Cardiac septum (tissue), 1 donor: ENCODE measurements at regions of chr12 and their contacts with region 1.

Region 1: GRCh38 chr12:112012775-112013600 is at the starts of genes ERP29 and TMEM116:
- DNase-seq: peak; percentile 100
- total RNA-seq, gene ERP29: 42.1 TPM
- total RNA-seq, gene TMEM116: 32.2 TPM

Region 2: GRCh38 chr12:111841750-111842555 is 171.0 kb before region 1 on chr12 and contains the start of gene MAPKAPK5:
- intact Hi-C with region 1: loop called (anchors 2 kb)
- DNase-seq: peak; percentile 96
- total RNA-seq, gene MAPKAPK5: 25.7 TPM

Region 3: GRCh38 chr12:111942557-111942956 is 70.4 kb before region 1 on chr12:
- intact Hi-C with region 1: loop called (anchors 5 kb)
- DNase-seq: no peak

Region 4: DNA sequence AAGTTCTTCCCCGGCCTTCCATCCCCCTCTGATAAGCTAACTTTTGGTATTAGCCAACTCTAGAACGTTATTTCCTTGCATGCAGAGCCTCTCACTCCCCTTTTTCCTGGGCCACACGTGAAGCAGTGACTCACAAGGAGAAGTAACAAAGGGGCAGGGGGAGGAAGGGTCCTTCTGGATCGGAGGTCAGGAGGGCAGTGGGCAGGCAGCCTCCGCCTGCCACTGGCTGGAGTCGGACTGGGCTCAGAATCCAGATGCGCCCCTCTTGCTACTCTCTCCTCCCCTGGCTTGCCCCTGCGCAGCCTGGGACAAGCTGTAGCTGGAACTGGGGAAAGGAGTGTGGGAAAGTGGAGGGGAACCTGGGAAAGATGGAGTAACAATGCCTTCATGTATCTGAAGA is 1263.3 kb after region 1 on chr12:
- intact Hi-C with region 1: no loop called
- DNase-seq: no peak